Mammary epithelial cell (primary cell): ENCODE measurements at regions of chr22 and their contacts with region 1.

Region 1: DNA sequence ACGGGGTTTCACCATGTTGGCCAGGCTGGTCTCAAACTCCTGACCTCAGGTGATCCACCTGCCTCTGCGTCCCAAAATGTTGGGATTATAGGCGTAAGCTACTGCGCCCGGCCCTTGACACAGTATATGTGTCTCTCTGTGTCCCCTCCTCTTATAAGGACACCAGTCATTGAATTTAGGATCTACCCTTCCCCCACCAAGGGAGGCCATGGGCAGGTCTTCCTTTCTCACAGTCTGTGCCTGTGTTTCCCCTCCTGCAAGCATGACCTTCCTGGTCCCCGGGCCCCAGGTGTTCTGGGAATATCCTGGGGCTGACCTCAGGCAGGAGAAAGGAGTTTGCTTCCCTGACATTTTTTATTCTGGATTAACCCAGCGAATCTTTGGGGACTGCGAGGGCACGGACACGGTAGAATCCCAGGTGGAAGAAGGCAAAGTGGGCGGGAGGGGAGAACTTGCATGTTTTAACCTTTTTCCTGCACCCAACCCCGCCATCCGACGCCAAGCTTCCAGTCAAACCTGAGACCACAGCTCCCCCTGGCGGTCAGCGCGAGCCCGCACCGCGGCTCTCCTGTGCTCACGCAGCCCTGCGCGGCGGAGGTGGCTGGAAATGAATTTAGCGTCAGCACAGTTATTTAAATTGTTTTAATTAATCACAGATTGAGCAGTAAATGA is 42.1 kb upstream of the ISX start:
- DNase-seq: peak; percentile 32
- H3K4me3 ChIP-seq: no peak overlapping the region
- H3K27ac ChIP-seq: no peak overlapping the region
- H3K4me1 ChIP-seq: no peaks in the 10 kb centered on the region
- H3K27me3 ChIP-seq: no peaks in the 10 kb centered on the region
- CTCF ChIP-seq: peak; percentile 39 to 75

Region 2: GRCh38 chr22:34414484-34415440 is 609.1 kb before region 1 on chr22:
- CTCF ChIA-PET with region 1: no interaction called
- dilution Hi-C with region 1: no loop called
- in situ Hi-C with region 1: loop called in 1 of 2 experiments (anchors 10 kb)
- intact Hi-C with region 1: loop called (anchors 1 kb)
- DNase-seq: peak; percentile 73
- H3K4me3 ChIP-seq: no peak overlapping the region
- H3K27ac ChIP-seq: no peak overlapping the region
- H3K4me1 ChIP-seq: no peaks in the 10 kb centered on the region
- H3K27me3 ChIP-seq: no peaks in the 10 kb centered on the region
- CTCF ChIP-seq: peak; percentile 75 to 83

Region 3: GRCh38 chr22:34841331-34841771 is 182.5 kb before region 1 on chr22:
- CTCF ChIA-PET with region 1: no interaction called
- dilution Hi-C with region 1: no loop called
- in situ Hi-C with region 1: no loop called
- intact Hi-C with region 1: loop called (anchors 5 kb)
- DNase-seq: no peak
- H3K4me3 ChIP-seq: no peak overlapping the region
- H3K27ac ChIP-seq: no peak overlapping the region
- H3K4me1 ChIP-seq: no peaks in the 10 kb centered on the region
- H3K27me3 ChIP-seq: no peaks in the 10 kb centered on the region
- CTCF ChIP-seq: no peak

Region 4: DNA sequence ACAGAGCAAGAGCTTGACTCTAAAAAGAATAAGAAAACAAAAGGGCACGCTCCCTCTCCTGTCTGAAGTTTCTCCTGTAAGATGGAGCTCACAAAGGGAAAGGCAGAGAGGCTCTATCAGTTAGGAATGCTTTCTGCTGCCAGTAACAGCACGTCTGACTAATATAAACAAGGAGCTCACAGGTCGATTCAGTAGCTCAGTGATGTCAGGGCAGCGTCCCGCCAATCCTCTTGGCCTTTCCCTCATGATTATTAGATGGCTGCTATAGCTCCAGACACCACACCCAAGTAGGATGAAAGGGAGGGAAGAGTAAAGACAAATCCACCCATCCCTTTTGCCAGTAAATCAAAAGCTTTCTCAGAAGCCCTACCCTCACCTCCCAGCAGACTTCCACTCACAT is 182.1 kb after region 1 on chr22:
- CTCF ChIA-PET with region 1: no interaction called
- dilution Hi-C with region 1: no loop called
- in situ Hi-C with region 1: no loop called
- intact Hi-C with region 1: no loop called
- DNase-seq: peak; percentile 59
- H3K4me3 ChIP-seq: no peak overlapping the region
- H3K27ac ChIP-seq: no peak overlapping the region
- H3K4me1 ChIP-seq: no peaks in the 10 kb centered on the region
- H3K27me3 ChIP-seq: no peaks in the 10 kb centered on the region
- CTCF ChIP-seq: no peak